ENCODE measurements at regions of chr2 and their contacts with region 1.

Region 1: DNA sequence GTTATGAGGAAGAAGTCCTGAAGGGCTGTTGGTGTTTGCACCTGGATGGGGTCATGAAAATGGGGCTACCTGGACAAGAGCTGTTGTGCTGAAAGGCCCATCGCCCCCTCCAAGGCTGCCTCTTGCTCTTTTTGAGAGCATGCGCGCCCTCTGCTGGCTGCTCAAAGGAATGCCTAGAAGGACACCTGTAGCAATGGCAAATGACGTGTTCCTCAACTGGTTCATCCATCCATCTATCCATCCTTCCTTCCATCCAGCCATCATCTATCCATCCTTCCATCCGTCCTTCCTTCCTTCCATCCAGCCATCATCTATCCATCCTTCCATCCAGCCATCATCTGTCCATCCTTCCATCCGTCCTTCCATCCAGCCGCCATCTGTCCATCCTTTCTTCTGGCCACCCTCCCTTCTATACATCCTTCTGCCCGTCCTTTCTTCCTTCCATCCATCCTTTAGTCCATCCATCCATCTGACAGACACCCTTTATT is 17.2 kb upstream of the RPL31 start:
- DNase-seq: peak; percentile 66 to 84 (median 77)
- H3K4me3 ChIP-seq: no peak overlapping the region
- H3K27ac ChIP-seq: no peak overlapping the region
- H3K4me1 ChIP-seq: peaks cover 2% of the 10 kb centered on the region
- H3K27me3 ChIP-seq: no peaks in the 10 kb centered on the region
- CTCF ChIP-seq: peak in 2 of 3 donors; percentile 77 to 81
- EP300 ChIP-seq: no peak
- POLR2A ChIP-seq: no peak

Region 2: GRCh38 chr2:100262555-100263320 is 722.2 kb before region 1 on chr2:
- intact Hi-C with region 1: loop called in 1 of 4 experiments (anchors 10 kb)
- DNase-seq: peak; percentile 69 to 89 (median 83)
- H3K4me3 ChIP-seq: no peak overlapping the region
- H3K27ac ChIP-seq: no peak overlapping the region
- H3K4me1 ChIP-seq: no peaks in the 10 kb centered on the region
- H3K27me3 ChIP-seq: no peaks in the 10 kb centered on the region
- CTCF ChIP-seq: peak; percentile 87 to 95 (median 92)
- EP300 ChIP-seq: no peak
- POLR2A ChIP-seq: no peak

Region 3: DNA sequence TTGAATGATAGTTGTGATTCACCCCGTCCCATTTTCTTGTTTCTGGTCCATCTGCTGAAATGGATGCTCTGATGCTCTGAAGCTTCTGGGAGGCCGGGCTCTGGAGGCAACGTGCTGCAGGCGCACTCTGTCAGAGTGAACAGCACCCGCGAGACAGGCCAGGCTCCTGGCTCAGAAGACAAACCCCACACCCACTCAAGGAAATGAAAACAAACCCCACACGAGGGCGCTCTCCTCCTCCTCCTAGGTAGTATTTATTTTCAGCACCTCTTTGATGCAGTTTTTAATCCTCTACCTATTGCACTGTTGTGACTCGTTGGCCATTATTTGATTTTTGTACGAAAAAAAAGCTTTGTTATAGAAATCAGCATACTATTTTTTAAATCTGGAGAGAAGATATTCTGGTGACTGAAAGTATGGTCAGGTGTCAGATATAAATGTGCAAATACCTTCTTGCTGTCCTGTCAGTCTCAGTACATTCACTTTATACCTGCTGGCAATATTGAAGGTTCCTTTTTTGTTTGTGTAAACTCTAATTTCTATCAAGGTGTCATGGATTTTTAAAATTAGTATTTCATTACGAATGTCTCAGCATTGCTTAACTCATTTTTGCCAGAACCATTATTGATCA is 557.2 kb before region 1 on chr2:
- intact Hi-C with region 1: loop called in 2 of 4 experiments (anchors 10 kb)
- DNase-seq: peak; percentile 44 to 71 (median 56)
- H3K4me3 ChIP-seq: no peak overlapping the region
- H3K27ac ChIP-seq: no peak overlapping the region
- H3K4me1 ChIP-seq: no peaks in the 10 kb centered on the region
- H3K27me3 ChIP-seq: no peaks in the 10 kb centered on the region
- CTCF ChIP-seq: no peak
- EP300 ChIP-seq: no peak
- POLR2A ChIP-seq: no peak

Region 4: GRCh38 chr2:100588071-100588786 is 396.7 kb before region 1 on chr2:
- intact Hi-C with region 1: no loop called
- DNase-seq: no peak
- H3K4me3 ChIP-seq: no peak overlapping the region
- H3K27ac ChIP-seq: no peak overlapping the region
- H3K4me1 ChIP-seq: no peaks in the 10 kb centered on the region
- H3K27me3 ChIP-seq: no peaks in the 10 kb centered on the region
- CTCF ChIP-seq: no peak
- EP300 ChIP-seq: no peak
- POLR2A ChIP-seq: no peak

Region 5: GRCh38 chr2:100610381-100610831 is 374.5 kb before region 1 on chr2:
- intact Hi-C with region 1: loop called (anchors 5 kb)
- DNase-seq: peak; percentile 30 to 74 (median 57)
- H3K4me3 ChIP-seq: no peak overlapping the region
- H3K27ac ChIP-seq: no peak overlapping the region
- H3K4me1 ChIP-seq: no peaks in the 10 kb centered on the region
- H3K27me3 ChIP-seq: no peaks in the 10 kb centered on the region
- CTCF ChIP-seq: peak in 1 of 3 donors; percentile 39
- EP300 ChIP-seq: no peak
- POLR2A ChIP-seq: no peak

Region 6: DNA sequence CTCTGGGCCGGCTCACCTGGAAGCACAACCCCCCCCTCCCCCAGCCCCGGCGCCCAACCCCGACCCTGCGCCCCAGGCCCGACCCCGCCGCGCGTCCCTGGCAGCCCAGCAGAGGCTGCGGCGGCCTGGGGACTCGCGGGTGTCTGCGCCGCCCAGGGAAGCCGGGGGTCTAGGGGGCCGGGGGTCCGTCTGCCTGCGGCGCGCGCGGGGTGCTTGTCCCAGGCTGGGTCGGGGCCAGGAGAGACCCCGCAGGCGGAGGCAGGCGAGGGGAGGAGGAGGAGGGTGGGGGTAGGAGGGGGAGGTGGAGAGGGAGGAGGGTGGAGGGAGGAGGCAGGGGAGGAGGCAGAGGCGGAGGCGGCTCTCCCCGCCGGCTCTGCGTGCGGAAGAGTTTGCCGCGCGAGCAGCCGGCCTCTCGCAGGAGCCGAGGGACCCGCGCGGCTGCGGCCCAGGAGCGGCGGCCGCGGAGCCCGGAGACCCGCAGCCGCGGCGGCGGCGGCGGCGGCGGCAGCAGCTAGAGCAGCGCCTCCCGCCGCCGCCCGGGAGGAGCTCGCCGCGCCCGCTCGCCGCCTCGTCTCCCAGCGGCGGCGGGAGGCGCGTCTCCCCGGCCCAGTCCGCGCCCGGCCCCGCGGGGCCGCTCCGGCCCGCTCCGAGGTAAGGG is 165.0 kb before region 1 on chr2 and contains the start of gene NPAS2:
- intact Hi-C with region 1: loop called in 1 of 4 experiments (anchors 10 kb)
- DNase-seq: peak in 4 of 5 donors; percentile 21 to 44 (median 34)
- H3K4me3 ChIP-seq: peak within 1 kb of the TSS; percentile 71
- H3K27ac ChIP-seq: peak within 1 kb of the TSS in 1 of 2 donors; percentile 23
- H3K4me1 ChIP-seq: peaks cover 8% of the 10 kb centered on the region
- H3K27me3 ChIP-seq: no peaks in the 10 kb centered on the region
- CTCF ChIP-seq: no peak
- EP300 ChIP-seq: no peak
- POLR2A ChIP-seq: no peak
- total RNA-seq, gene NPAS2: 1.6 to 12.4 (median 7.3) TPM

Region 7: GRCh38 chr2:101179982-101180381 is 195.0 kb after region 1 on chr2:
- intact Hi-C with region 1: no loop called
- DNase-seq: no peak
- H3K4me3 ChIP-seq: no peak overlapping the region
- H3K27ac ChIP-seq: no peak overlapping the region
- H3K4me1 ChIP-seq: no peaks in the 10 kb centered on the region
- H3K27me3 ChIP-seq: no peaks in the 10 kb centered on the region
- CTCF ChIP-seq: no peak
- EP300 ChIP-seq: no peak
- POLR2A ChIP-seq: no peak

Measured in ovary (tissue), 10 donors.